ENCODE measurements at regions of chr9 and their contacts with region 1.

Region 1: DNA sequence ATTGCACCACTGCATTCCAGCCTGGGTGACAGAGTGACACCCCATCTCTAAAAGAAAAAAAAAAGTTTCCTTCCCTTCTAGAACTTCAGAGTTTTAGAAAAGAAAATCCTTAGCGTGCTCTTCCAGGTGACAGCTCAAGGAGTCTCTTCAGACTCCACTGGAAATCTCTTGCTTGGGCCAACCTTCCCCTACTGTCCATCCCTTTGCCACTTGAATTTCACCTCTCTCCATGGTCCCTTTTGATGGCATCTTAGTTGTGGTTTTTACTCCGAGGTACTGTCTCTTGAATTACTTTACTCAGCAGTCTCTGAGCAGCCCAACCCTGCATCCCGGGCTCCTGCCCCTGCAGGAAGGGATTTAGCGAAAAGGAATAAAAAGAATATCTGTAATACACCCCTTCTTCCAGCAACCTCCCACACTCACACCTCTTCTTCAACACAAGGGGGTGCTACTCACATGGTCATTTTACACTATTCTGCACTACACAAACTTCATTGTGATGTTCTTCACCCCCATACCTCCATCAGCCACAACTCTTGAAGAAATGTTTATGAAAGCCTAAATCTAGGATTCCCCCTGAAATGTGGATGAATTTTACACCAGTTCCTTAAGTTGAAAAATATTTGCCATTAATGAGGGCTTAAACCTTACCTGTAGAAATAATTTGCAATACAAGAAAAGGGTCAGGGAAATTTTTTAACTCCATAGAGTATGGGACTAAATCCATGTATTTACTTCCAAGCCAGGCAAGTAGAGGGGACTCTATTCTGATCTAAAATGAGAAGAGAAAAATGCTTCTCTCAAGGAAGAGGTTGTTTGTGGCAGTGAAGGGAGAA is 25.9 kb downstream of the TPD52L3 start:
- DNase-seq: peak; percentile 27
- H3K4me3 Mint-ChIP-seq: no peak overlapping the region
- H3K27ac Mint-ChIP-seq: no peak overlapping the region
- H3K4me1 Mint-ChIP-seq: peaks cover 21% of the 10 kb centered on the region
- H3K27me3 Mint-ChIP-seq: peaks cover 19% of the 10 kb centered on the region

Region 2: GRCh38 chr9:6566409-6567139 is 212.5 kb after region 1 on chr9:
- CTCF ChIA-PET with region 1: interaction called, 113 read pairs
- POLR2A ChIA-PET with region 1: no interaction called
- DNase-seq: peak; percentile 72
- H3K4me3 Mint-ChIP-seq: peak overlapping the region; percentile 54
- H3K27ac Mint-ChIP-seq: peak overlapping the region; percentile 93
- H3K4me1 Mint-ChIP-seq: peaks cover 33% of the 10 kb centered on the region
- H3K27me3 Mint-ChIP-seq: no peaks in the 10 kb centered on the region

Measured in activated CD4-positive, alpha-beta memory T cell treated with anti-CD3 and anti-CD28 coated beads, Interleukin-2, amount 10 ng/mL, durations not matched to agents 7 days and 5 days (primary cell).